ENCODE measurements at regions of chr2 and their contacts with region 1.

Region 1: GRCh38 chr2:222707689-222708525 is 36.4 kb downstream of the MOGAT1 start:
- DNase-seq: peak; percentile 88
- ATAC-seq: peak; percentile 90
- H3K4me3 Mint-ChIP-seq: no peak overlapping the region
- H3K27ac Mint-ChIP-seq: no peak overlapping the region
- H3K4me1 Mint-ChIP-seq: peaks cover 12% of the 10 kb centered on the region
- H3K27me3 Mint-ChIP-seq: peaks cover 18% of the 10 kb centered on the region

Region 2: DNA sequence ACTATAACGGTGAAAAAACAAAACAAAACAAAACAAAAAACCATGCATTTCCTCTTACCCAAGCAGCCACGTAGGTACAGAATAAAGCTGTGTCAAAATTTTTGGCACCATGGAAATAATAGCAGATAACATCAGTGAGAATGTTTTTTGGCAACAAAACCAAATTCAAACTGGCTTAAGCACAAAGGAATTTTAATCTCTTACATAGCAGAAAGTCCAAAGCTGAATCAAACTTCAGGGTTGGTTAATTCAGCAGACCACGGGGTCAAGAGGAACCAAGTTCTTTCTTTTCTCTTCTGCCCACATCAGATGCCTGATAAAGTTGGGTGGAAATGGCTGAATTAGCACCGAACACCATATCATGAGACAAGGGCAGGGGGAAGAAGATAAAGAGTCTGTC is 538.6 kb before region 1 on chr2:
- CTCF ChIA-PET with region 1: no interaction called
- POLR2A ChIA-PET with region 1: no interaction called
- intact Hi-C with region 1: no loop called
- DNase-seq: no peak
- ATAC-seq: no peak
- H3K4me3 Mint-ChIP-seq: no peak overlapping the region
- H3K27ac Mint-ChIP-seq: no peak overlapping the region
- H3K4me1 Mint-ChIP-seq: no peaks in the 10 kb centered on the region
- H3K27me3 Mint-ChIP-seq: peaks cover 3% of the 10 kb centered on the region

Region 3: GRCh38 chr2:222792001-222792611 is 84.2 kb after region 1 on chr2:
- CTCF ChIA-PET with region 1: interaction called, 3 read pairs
- POLR2A ChIA-PET with region 1: no interaction called
- intact Hi-C with region 1: loop called in 1 of 2 experiments (anchors 5 kb)
- DNase-seq: no peak
- ATAC-seq: no peak
- H3K4me3 Mint-ChIP-seq: no peak overlapping the region
- H3K27ac Mint-ChIP-seq: no peak overlapping the region
- H3K4me1 Mint-ChIP-seq: peaks cover 16% of the 10 kb centered on the region
- H3K27me3 Mint-ChIP-seq: no peaks in the 10 kb centered on the region

Region 4: DNA sequence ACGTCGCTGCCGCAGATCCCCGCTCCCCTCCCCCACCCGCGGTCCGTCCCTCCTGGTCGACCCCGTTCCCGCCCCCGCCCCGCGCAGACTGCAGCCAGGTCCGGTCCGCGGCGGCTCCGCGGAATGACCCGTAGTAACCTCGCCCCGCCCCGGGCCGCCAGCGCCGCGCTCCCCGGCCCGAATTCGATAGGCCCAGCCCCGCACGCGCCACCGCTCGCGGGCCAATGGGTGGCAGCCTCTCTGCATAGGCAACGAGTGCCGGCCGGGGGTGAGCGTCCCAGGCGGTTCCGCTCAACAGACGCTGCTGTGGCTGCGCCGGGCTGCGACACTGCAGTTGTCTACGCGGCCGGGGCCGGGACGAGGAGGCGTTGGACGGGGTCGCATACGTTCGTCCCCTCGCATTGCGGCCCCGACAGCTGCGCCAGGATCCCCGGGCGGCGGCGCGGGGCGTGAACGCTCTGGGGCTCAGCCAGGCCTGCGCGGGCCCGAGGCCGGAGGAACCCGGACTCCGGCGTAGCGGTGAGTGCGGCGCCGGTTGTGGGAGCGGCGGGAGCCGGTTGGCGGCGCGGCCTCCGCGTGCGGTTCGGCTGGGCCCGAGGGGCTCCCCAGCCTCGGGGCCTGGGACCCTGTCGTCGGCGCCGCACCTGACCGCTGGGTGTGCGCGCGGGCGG is 153.0 kb after region 1 on chr2 and contains the start of gene ACSL3:
- CTCF ChIA-PET with region 1: interaction called, 3 read pairs
- POLR2A ChIA-PET with region 1: no interaction called
- intact Hi-C with region 1: loop called in 1 of 2 experiments (anchors 1 kb)
- DNase-seq: peak; percentile 97
- ATAC-seq: peak; percentile 100
- H3K4me3 Mint-ChIP-seq: peak within 1 kb of the TSS; percentile 67
- H3K27ac Mint-ChIP-seq: peak within 1 kb of the TSS; percentile 91
- H3K4me1 Mint-ChIP-seq: peaks cover 9% of the 10 kb centered on the region
- H3K27me3 Mint-ChIP-seq: peaks cover 4% of the 10 kb centered on the region
- total RNA-seq, gene ACSL3: 46.2 to 48.8 TPM

Region 5: DNA sequence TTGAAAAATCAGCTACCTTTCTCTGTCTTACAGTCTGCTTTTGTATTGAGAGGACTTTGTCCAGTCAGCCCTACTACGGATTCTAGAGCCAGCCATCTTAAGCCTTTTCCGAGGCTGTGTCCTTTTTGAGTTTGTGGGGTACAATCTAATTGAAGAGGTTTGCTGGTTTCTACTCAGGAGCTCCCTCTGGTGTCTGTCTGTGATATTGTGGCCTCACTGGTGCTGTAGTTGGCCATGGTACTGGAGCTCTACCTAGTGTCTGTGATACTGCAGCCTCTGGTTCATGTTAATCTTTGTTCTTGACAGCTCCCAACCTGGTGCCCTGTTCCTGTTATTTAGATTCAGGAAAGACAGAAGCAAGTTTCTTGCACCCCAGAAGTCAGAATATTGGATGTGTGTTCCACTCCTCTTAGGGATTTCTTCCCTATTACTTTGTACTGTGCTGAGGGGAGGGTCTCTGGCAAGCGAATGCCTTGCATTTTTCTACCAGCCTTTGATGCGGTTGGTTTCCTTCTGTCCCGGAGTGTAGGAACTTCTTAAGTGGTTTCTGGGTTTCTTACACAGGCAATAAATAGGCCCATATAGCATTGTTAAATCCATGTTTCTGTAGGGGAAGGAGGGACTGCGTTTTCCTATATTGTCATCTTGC is 231.4 kb after region 1 on chr2:
- CTCF ChIA-PET with region 1: interaction called, 29 read pairs
- POLR2A ChIA-PET with region 1: interaction called, 3 read pairs
- intact Hi-C with region 1: loop called (anchors 1 kb)
- DNase-seq: peak; percentile 78
- ATAC-seq: peak; percentile 91
- H3K4me3 Mint-ChIP-seq: no peak overlapping the region
- H3K27ac Mint-ChIP-seq: no peak overlapping the region
- H3K4me1 Mint-ChIP-seq: peaks cover 15% of the 10 kb centered on the region
- H3K27me3 Mint-ChIP-seq: no peaks in the 10 kb centered on the region

Measured in activated CD4-positive, alpha-beta T cell treated with anti-CD3 and anti-CD28 coated beads for 36 hours (primary cell).